ENCODE measurements at regions of chr7 and their contacts with region 1.

Region 1: DNA sequence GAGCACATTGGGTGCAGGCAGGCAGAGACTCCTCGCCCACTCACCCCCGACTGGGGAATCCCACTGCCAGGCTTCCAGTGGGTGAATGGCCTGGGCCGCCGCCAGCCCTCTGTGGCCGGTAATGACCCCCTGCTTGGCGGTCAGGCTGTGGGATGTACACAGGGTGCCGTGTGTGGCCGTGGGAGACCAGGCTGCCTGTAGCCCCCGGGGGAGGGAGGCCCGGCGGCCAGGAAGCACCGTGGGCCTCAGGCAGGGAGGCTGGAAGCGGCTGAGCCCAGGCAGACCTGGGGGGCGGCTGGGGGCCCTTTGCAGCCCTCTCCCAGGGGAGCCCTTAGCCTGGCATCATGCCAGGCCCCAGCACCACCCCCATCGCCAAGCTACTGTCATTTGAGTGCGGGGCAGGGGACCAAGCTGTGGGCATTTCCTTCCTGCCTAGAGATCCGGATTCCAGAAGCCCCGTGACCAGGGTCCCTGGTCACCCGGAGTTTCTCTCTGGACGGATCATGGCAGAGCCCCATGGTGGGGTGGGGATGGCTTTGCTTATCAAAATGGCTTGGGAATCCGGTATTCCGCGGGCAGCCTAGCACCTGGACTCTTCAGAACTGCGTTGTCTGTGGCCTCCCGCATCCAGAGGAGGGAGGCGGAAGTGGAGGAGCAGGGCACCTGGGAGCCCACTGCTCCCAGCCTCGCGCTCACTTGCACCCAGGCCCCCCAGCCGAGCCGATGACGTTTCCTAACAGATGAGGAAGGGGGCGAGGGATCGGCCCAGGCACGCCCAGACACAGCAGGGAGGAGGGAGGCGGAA is 1.1 kb downstream of the TTYH3 start:
- DNase-seq: peak; percentile 68
- ATAC-seq: no peak
- H3K4me3 ChIP-seq: peak overlapping the region; percentile 40 to 97 (median 82)
- H3K4me3 Mint-ChIP-seq: peak overlapping the region; percentile 92
- H3K27ac ChIP-seq: peak overlapping the region; percentile 68 to 71
- H3K27ac Mint-ChIP-seq: peak overlapping the region; percentile 91
- H3K4me1 ChIP-seq: peaks cover 33 to 52% of the 10 kb centered on the region in 2 donors
- H3K4me1 Mint-ChIP-seq: peaks cover 44% of the 10 kb centered on the region
- H3K27me3 ChIP-seq: no peaks in the 10 kb centered on the region
- H3K27me3 Mint-ChIP-seq: no peaks in the 10 kb centered on the region
- CTCF ChIP-seq: no peak

Region 2: GRCh38 chr7:2403014-2403717 is 229.8 kb before region 1 on chr7 and contains the start of gene CHST12:
- CTCF ChIA-PET with region 1: no interaction called
- POLR2A ChIA-PET with region 1: no interaction called
- intact Hi-C with region 1: loop called (anchors 5 kb)
- DNase-seq: peak; percentile 98
- ATAC-seq: peak; percentile 78
- H3K4me3 ChIP-seq: peak within 1 kb of the TSS; percentile 50 to 83 (median 77)
- H3K4me3 Mint-ChIP-seq: peak within 1 kb of the TSS; percentile 88
- H3K27ac ChIP-seq: peak within 1 kb of the TSS; percentile 27 to 72
- H3K27ac Mint-ChIP-seq: peak within 1 kb of the TSS; percentile 86
- H3K4me1 ChIP-seq: peaks cover 33 to 55% of the 10 kb centered on the region in 2 donors
- H3K4me1 Mint-ChIP-seq: peaks cover 46% of the 10 kb centered on the region
- H3K27me3 ChIP-seq: no peaks in the 10 kb centered on the region
- H3K27me3 Mint-ChIP-seq: no peaks in the 10 kb centered on the region
- CTCF ChIP-seq: no peak
- total RNA-seq, gene CHST12: 25.4 TPM in 2 replicates

Region 3: DNA sequence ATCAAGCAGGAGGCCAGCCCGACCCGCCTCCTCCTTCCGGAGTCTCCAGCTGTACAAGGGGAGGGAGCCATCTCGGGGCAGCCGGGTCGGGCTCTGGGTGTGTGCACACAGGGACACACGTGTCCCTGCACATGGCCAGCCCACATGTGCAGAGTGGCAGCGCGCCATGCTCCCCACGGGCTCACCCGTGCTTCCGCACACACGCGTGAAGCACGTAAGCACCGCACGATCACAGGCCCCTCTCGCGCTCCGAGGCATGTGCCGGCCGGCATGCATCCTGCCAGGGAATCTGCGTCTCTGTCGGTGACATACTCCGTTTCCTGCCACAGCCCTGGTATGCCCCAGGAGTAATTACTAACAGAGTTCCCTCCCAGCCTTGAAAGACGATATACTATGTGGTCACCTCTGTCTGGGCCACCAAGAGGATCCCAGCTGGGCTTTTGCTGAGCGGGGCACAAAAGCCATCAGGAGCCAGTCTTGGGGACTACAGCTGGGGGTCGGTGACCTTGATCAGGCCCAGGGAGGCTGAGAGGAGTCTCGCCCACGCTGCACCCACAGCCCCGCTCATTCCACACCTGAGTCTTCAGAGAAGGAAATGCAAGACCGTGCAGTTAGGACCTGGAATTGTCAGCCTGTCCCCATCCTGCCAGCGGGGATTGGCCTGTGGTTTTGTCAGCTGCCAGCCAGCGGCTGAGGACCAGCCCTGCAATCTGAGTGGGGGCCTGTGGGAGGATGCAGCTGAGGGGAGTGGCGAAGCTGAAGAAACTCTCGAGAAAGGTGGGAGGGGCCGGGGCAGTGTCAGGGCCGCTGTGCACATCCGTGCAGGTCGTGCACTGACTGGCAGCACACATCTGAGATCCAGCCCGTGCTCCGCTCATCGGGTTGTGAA is 124.4 kb before region 1 on chr7:
- CTCF ChIA-PET with region 1: no interaction called
- POLR2A ChIA-PET with region 1: interaction called, 10 read pairs
- intact Hi-C with region 1: no loop called
- DNase-seq: peak; percentile 90
- ATAC-seq: peak; percentile 48
- H3K4me3 ChIP-seq: peak overlapping the region in 4 of 5 experiments; percentile 25 to 46 (median 34)
- H3K4me3 Mint-ChIP-seq: peak overlapping the region; percentile 88
- H3K27ac ChIP-seq: peak overlapping the region; percentile 99 to 100
- H3K27ac Mint-ChIP-seq: peak overlapping the region; percentile 99
- H3K4me1 ChIP-seq: peaks cover 58 to 63% of the 10 kb centered on the region in 2 donors
- H3K4me1 Mint-ChIP-seq: peaks cover 67% of the 10 kb centered on the region
- H3K27me3 ChIP-seq: no peaks in the 10 kb centered on the region
- H3K27me3 Mint-ChIP-seq: no peaks in the 10 kb centered on the region
- CTCF ChIP-seq: no peak

Region 4: GRCh38 chr7:2519119-2519930 is 113.6 kb before region 1 on chr7 and contains the start of gene LFNG:
- CTCF ChIA-PET with region 1: no interaction called
- POLR2A ChIA-PET with region 1: no interaction called
- intact Hi-C with region 1: loop called (anchors 5 kb)
- DNase-seq: peak; percentile 94
- ATAC-seq: peak; percentile 80
- H3K4me3 ChIP-seq: peak within 1 kb of the TSS; percentile 84 to 100 (median 97)
- H3K4me3 Mint-ChIP-seq: peak within 1 kb of the TSS; percentile 99
- H3K27ac ChIP-seq: peak within 1 kb of the TSS; percentile 62 to 75
- H3K27ac Mint-ChIP-seq: peak within 1 kb of the TSS; percentile 96
- H3K4me1 ChIP-seq: peaks cover 40 to 49% of the 10 kb centered on the region in 2 donors
- H3K4me1 Mint-ChIP-seq: peaks cover 52% of the 10 kb centered on the region
- H3K27me3 ChIP-seq: no peaks in the 10 kb centered on the region
- H3K27me3 Mint-ChIP-seq: no peaks in the 10 kb centered on the region
- CTCF ChIP-seq: no peak
- total RNA-seq, gene LFNG: 208 and 221 TPM in 2 replicates

Region 5: DNA sequence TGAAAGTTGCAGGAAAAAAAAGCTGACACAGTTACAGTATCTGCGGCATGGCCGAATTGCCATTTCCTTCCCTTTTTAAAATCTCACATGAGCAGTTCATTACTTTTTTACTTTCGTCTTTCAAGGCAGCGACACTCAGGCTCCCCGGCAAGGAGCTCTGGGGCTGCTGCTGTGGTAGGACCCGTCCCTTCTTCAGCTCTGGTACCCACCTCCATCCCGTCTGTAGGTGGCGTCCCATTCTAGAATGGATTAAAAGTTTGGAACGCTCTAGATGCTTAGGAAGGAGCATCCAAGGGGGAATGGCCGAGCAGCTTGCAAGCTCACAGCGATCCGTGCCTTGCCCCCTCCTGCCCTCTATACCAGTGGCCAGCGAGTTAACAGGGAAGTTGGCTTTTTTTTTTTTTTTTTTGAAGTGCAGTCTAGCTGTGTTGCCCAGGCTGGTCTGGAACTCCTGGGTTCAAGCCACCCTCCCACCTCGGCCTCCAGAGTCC is 24.0 kb before region 1 on chr7:
- CTCF ChIA-PET with region 1: interaction called, 3 read pairs
- POLR2A ChIA-PET with region 1: no interaction called
- intact Hi-C with region 1: loop called (anchors 1 kb)
- DNase-seq: peak; percentile 83
- ATAC-seq: peak; percentile 94
- H3K4me3 ChIP-seq: peak overlapping the region in 4 of 5 experiments; percentile 18 to 48 (median 37)
- H3K4me3 Mint-ChIP-seq: peak overlapping the region; percentile 87
- H3K27ac ChIP-seq: peak overlapping the region in 1 of 2 donors; percentile 42
- H3K27ac Mint-ChIP-seq: peak overlapping the region; percentile 88
- H3K4me1 ChIP-seq: peaks cover 15 to 25% of the 10 kb centered on the region in 2 donors
- H3K4me1 Mint-ChIP-seq: peaks cover 25% of the 10 kb centered on the region
- H3K27me3 ChIP-seq: no peaks in the 10 kb centered on the region
- H3K27me3 Mint-ChIP-seq: no peaks in the 10 kb centered on the region
- CTCF ChIP-seq: peak; percentile 57

Region 6: GRCh38 chr7:2651336-2651735 is 18.4 kb after region 1 on chr7:
- CTCF ChIA-PET with region 1: no interaction called
- POLR2A ChIA-PET with region 1: no interaction called
- intact Hi-C with region 1: no loop called
- DNase-seq: no peak
- ATAC-seq: peak; percentile 51
- H3K4me3 ChIP-seq: no peak overlapping the region
- H3K4me3 Mint-ChIP-seq: no peak overlapping the region
- H3K27ac ChIP-seq: no peak overlapping the region
- H3K27ac Mint-ChIP-seq: no peak overlapping the region
- H3K4me1 ChIP-seq: peaks cover 0 to 2% of the 10 kb centered on the region in 2 donors
- H3K4me1 Mint-ChIP-seq: no peaks in the 10 kb centered on the region
- H3K27me3 ChIP-seq: no peaks in the 10 kb centered on the region
- H3K27me3 Mint-ChIP-seq: no peaks in the 10 kb centered on the region
- CTCF ChIP-seq: no peak

Region 7: GRCh38 chr7:2844165-2844898 is 211.4 kb after region 1 on chr7 and contains the start of gene GNA12:
- CTCF ChIA-PET with region 1: no interaction called
- POLR2A ChIA-PET with region 1: no interaction called
- intact Hi-C with region 1: loop called (anchors 1 kb)
- DNase-seq: peak; percentile 98
- ATAC-seq: peak; percentile 93
- H3K4me3 ChIP-seq: peak within 1 kb of the TSS; percentile 50 to 70 (median 65)
- H3K4me3 Mint-ChIP-seq: peak within 1 kb of the TSS; percentile 95
- H3K27ac ChIP-seq: peak within 1 kb of the TSS in 1 of 2 donors; percentile 53
- H3K27ac Mint-ChIP-seq: peak within 1 kb of the TSS; percentile 80
- H3K4me1 ChIP-seq: peaks cover 34 to 45% of the 10 kb centered on the region in 2 donors
- H3K4me1 Mint-ChIP-seq: peaks cover 51% of the 10 kb centered on the region
- H3K27me3 ChIP-seq: no peaks in the 10 kb centered on the region
- H3K27me3 Mint-ChIP-seq: no peaks in the 10 kb centered on the region
- CTCF ChIP-seq: no peak
- total RNA-seq, gene GNA12: 110 and 114 TPM in 2 replicates